MCF 10A (cell line): ENCODE measurements at regions of chr22 and their contacts with region 1.

Region 1: GRCh38 chr22:36239401-36240171 is at the start of gene APOL2:
- DNase-seq: peak; percentile 92
- H3K4me3 Mint-ChIP-seq: peak within 1 kb of the TSS; percentile 97
- H3K27ac Mint-ChIP-seq: peak within 1 kb of the TSS; percentile 97
- H3K4me1 Mint-ChIP-seq: peaks cover 28% of the 10 kb centered on the region
- H3K27me3 Mint-ChIP-seq: no peaks in the 10 kb centered on the region
- CTCF ChIP-seq: peak; percentile 36
- total RNA-seq, gene APOL2: 16.0 and 38.7 TPM in 2 replicates

Region 2: GRCh38 chr22:36144886-36145541 is 94.6 kb before region 1 on chr22:
- CTCF ChIA-PET with region 1: interaction called, 25 read pairs
- POLR2A ChIA-PET with region 1: interaction called, 5 read pairs
- intact Hi-C with region 1: loop called (anchors 1 kb)
- DNase-seq: peak; percentile 62
- H3K4me3 Mint-ChIP-seq: no peak overlapping the region
- H3K27ac Mint-ChIP-seq: no peak overlapping the region
- H3K4me1 Mint-ChIP-seq: peaks cover 23% of the 10 kb centered on the region
- H3K27me3 Mint-ChIP-seq: peaks cover 32% of the 10 kb centered on the region
- CTCF ChIP-seq: peak; percentile 87

Region 3: DNA sequence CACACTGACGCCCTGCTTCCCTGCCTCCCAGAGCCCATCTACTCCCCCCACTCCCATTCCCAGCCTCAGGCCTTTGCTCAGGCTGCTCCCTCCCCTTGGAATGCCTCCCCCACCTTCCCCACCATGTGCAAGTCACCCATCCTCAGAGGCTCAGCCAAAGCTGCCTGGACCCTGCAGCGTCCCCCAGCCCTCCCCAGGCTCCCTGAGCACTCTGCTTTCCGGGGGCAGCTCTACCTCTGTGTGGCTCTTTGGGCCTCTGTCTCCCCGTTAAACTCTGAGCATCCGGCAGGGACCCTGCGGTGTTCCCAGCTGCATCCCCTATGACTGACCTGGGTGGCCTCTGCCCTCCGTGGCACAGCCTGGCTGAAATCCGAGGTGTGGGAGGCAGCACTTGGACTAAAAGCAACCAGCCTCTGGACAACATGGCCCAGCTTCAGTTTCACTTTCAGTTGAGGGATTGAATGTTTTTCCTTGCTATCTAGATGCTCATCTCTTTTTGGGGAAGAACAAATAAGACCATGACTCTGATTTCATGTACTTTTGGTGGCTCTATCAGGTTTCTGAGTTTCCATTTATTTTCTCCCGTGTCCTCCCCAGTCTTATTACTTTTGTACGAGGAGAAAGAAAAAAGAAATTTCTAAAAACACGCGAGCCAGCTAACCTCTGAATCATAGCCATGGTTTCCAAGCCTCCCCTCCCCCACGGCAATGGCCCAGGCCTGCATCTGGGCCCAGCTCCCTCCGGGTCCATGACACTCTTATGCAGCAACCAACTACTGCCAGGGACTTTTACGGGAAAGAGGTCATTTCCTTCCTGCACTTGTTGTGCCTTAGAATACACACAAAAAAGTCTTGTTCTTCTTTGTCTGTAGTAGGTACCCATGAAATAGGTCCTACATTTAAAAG is 82.8 kb before region 1 on chr22:
- CTCF ChIA-PET with region 1: interaction called, 10 read pairs
- POLR2A ChIA-PET with region 1: interaction called, 7 read pairs
- intact Hi-C with region 1: no loop called
- DNase-seq: peak; percentile 78
- H3K4me3 Mint-ChIP-seq: peak overlapping the region; percentile 64
- H3K27ac Mint-ChIP-seq: peak overlapping the region; percentile 98
- H3K4me1 Mint-ChIP-seq: peaks cover 31% of the 10 kb centered on the region
- H3K27me3 Mint-ChIP-seq: no peaks in the 10 kb centered on the region
- CTCF ChIP-seq: no peak

Region 4: DNA sequence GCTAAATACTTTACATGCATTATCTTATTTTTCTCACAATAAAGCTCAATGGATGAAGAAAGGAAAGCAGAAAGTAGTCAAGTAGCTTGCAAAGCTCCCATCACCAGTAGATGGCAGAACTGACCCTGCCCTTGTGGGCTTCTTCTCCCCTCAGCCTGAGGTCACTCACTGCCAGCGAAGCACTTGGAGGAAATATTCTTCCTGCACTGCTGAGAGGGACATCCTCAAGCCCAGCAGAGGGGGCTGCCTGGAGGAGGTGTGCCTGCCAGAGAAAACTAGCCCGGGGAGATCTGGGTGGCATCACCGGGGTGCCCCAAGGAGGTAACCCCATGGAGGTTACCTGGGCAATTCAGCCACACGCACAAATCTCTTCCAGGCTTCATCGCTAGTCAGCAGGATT is 44.6 kb before region 1 on chr22:
- CTCF ChIA-PET with region 1: no interaction called
- POLR2A ChIA-PET with region 1: interaction called, 6 read pairs
- intact Hi-C with region 1: loop called (anchors 5 kb)
- DNase-seq: peak; percentile 45
- H3K4me3 Mint-ChIP-seq: no peak overlapping the region
- H3K27ac Mint-ChIP-seq: no peak overlapping the region
- H3K4me1 Mint-ChIP-seq: no peaks in the 10 kb centered on the region
- H3K27me3 Mint-ChIP-seq: peaks cover 46% of the 10 kb centered on the region
- CTCF ChIP-seq: peak; percentile 69

Region 5: DNA sequence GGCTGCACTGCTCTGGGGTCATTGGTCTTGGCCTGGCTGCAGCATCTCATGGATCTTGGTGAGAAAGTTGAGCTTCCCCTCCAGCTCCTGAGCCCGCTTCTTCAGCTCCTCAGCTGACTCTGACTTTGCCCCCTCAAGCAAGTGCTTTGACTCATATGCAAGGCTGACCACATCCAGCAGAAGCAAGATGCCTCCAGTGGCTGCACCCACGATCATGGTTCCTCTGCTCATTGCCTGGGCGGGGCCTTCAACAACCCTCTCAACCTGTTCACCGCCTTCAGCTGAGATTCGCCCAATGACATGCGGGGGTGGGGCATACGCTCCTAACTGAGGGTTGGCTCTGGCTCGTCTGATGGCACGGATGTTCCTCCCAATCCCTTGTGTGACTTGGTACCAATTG is 12.2 kb before region 1 on chr22:
- CTCF ChIA-PET with region 1: interaction called, 15 read pairs
- POLR2A ChIA-PET with region 1: no interaction called
- intact Hi-C with region 1: no loop called
- DNase-seq: no peak
- H3K4me3 Mint-ChIP-seq: no peak overlapping the region
- H3K27ac Mint-ChIP-seq: no peak overlapping the region
- H3K4me1 Mint-ChIP-seq: no peaks in the 10 kb centered on the region
- H3K27me3 Mint-ChIP-seq: no peaks in the 10 kb centered on the region
- CTCF ChIP-seq: no peak

Region 6: DNA sequence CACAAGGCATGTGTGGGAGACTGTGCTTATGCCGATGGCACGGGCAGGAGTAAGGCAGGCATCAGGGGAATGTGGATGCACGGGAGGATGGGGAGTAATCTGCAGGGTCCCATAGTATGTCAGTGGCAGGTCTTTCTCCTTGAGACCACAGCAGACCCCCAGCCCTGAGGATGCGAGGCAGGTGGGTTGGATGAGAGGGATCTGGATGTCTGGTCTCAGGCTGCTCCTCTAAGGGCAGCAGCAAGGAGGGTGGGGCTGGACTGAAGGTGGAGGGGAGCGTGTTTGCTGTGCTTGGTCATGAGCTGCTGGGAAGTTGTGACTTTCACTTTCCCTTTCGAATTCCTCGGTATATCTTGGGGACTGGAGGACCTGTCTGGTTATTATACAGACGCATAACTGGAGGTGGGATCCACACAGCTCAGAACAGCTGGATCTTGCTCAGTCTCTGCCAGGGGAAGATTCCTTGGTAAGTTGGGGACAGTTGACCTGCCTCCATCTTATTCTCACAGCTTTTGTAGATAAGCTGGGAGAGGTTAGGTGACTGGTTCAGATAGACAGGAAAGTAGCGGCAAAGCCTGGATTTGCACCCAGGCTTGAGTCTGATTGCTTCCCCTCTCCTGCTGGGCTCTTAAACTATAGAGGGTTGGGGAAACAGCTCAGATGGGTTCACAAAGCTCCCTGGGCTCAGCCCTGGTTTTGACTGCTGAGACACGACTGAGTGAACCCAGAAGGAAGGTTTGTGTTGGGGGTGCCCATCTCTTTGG is 13.3 kb after region 1 on chr22 and contains the start of gene APOL1:
- CTCF ChIA-PET with region 1: interaction called, 12 read pairs
- POLR2A ChIA-PET with region 1: interaction called, 4 read pairs
- intact Hi-C with region 1: no loop called
- DNase-seq: peak; percentile 35
- H3K4me3 Mint-ChIP-seq: no peak within 1 kb of the TSS
- H3K27ac Mint-ChIP-seq: peak within 1 kb of the TSS; percentile 39
- H3K4me1 Mint-ChIP-seq: no peaks in the 10 kb centered on the region
- H3K27me3 Mint-ChIP-seq: no peaks in the 10 kb centered on the region
- CTCF ChIP-seq: no peak
- total RNA-seq, gene APOL1: 0.14 and 0.69 TPM in 2 replicates

Region 7: DNA sequence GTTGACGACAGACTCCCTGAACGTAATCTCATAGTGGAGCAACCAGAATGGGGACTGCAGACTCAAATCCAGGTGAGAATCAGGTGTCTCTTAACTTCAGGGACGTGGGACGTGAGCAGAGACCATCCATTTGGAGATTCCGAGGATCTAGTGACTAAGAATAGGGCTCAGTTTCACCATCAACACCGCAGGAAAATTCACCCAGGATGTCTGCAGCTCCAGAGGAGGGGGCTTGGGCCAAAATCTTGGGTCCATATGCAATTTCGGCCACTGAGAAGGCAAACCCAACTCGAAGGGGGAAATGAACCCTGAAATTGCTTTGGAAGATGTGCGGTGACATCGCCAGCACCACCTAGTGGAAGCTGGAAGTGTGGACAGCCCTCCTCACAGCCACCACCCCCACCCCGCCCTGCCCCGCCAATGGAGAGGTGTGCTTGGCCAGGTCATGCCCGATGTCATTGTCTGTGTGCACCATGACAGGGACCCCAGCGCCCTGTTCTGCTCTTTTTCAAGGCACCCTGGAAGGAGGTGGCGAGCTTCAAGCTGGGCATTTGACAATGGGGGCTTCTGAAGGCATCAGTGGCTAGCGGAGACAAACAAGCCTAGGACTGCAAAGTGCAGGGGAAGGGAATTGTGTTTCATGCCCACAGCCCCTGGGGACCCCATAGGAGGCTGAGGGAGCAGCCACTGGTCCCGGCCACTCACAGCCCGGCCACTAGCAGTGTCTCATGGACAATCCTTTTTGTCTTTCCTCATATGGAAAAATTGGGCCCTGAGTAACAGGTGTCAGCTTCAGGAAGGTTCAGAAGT is 38.1 kb after region 1 on chr22:
- CTCF ChIA-PET with region 1: interaction called, 15 read pairs
- POLR2A ChIA-PET with region 1: interaction called, 4 read pairs
- intact Hi-C with region 1: no loop called
- DNase-seq: peak; percentile 66
- H3K4me3 Mint-ChIP-seq: no peak overlapping the region
- H3K27ac Mint-ChIP-seq: peak overlapping the region; percentile 19
- H3K4me1 Mint-ChIP-seq: peaks cover 6% of the 10 kb centered on the region
- H3K27me3 Mint-ChIP-seq: no peaks in the 10 kb centered on the region
- CTCF ChIP-seq: peak; percentile 68